IMR-90 (cell line): ENCODE measurements at regions of chr21 and their contacts with region 1.

Region 1: DNA sequence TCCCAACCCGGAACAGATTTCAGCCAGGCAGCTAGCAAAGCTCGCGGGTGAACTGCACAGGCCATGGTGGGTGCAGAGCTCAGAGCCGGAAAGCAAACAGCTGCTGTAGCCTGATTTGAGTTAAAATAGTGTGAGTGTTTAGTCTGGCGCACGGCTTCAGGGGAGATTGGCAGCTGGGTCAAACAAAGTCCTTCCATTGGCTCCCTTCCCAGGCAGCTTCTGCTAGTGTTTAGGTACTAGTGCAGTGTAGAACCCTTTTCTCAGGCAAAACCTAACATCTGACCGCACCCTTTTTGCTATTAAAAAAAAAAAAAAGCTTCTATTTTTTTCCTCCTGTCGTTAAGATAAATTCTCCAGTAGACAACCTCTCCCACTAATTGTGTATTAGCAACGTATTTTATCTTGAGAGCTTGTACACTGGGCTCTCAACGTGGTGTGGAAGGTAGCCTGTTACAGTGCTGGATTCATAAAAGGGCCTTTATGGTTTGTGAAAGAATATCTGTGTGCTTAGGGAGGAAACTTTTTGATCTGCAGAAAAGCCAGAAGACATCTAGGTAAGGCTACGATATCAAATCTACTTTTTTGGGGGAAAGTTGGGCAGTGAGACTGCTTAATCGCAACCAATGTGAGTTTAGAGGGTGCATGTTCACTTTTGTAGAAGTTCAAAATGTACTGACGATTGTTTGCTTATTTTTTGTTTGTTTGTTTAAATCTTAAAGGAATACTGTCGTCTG is 689.6 kb downstream of the USP25 start:
- DNase-seq: peak; percentile 57
- ATAC-seq: peak; percentile 73
- H3K4me3 ChIP-seq: no peak overlapping the region
- H3K27ac ChIP-seq: no peak overlapping the region
- H3K4me1 ChIP-seq: no peaks in the 10 kb centered on the region
- H3K27me3 ChIP-seq: no peaks in the 10 kb centered on the region
- CTCF ChIP-seq: no peak
- POLR2A ChIP-seq: no peak
- RAD21 ChIP-seq: no peak

Region 2: DNA sequence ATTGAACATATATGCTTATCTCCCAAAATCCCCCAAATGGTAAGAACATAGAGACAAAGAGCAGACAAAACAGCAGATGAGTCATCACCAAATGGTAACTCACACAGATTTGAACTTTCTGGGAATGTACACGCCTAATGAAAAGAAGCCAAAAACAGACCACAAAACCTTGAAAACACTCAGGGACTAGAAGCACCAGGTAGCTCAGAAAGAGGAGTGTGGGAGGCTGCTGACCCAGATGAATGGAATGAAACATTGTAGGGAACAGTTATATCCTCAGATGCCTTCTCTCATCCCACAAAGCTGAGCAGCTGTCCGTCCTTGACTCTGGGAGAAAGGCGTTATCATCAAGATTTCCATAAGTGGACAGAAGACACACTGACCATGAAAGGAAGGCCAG is 996.6 kb before region 1 on chr21:
- CTCF ChIA-PET with region 1: no interaction called
- POLR2A ChIA-PET with region 1: no interaction called
- dilution Hi-C with region 1: no loop called
- in situ Hi-C with region 1: no loop called
- intact Hi-C with region 1: loop called (anchors 5 kb)
- DNase-seq: peak; percentile 2
- ATAC-seq: no peak
- H3K4me3 ChIP-seq: no peak overlapping the region
- H3K27ac ChIP-seq: no peak overlapping the region
- H3K4me1 ChIP-seq: no peaks in the 10 kb centered on the region
- H3K27me3 ChIP-seq: no peaks in the 10 kb centered on the region
- CTCF ChIP-seq: no peak
- POLR2A ChIP-seq: no peak
- RAD21 ChIP-seq: no peak

Region 3: DNA sequence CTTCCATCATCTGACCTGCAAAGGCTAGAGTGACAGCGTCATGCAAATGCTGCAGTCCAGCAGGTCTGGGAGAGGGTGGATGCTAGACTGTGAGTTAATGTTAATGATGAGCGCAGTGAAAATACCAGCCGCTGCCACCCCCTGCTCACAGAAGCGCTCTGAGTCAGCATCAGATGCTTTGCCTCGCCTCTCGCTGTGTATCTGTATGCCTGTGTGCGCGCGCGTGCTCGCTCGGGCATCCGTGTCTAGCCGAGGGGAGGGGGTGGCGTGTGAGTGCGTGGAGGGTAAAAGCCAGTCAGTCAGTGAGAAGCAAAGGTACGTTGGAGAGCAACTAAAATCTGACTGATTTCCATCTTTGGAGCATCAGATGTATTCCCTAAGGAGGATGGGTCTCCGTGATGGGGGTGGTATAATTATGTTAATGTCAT is 169.1 kb after region 1 on chr21:
- CTCF ChIA-PET with region 1: no interaction called
- POLR2A ChIA-PET with region 1: no interaction called
- dilution Hi-C with region 1: no loop called
- in situ Hi-C with region 1: no loop called
- intact Hi-C with region 1: loop called (anchors 5 kb)
- DNase-seq: peak; percentile 84
- ATAC-seq: peak; percentile 98
- H3K4me3 ChIP-seq: peak overlapping the region; percentile 46
- H3K27ac ChIP-seq: no peak overlapping the region
- H3K4me1 ChIP-seq: peaks cover 6% of the 10 kb centered on the region; the same call in 1 of the 2 replicates
- H3K27me3 ChIP-seq: no peaks in the 10 kb centered on the region
- CTCF ChIP-seq: no peak
- POLR2A ChIP-seq: no peak; the same call in 1 of the 2 replicates
- RAD21 ChIP-seq: 0 out of 2 replicates have a peak, but pooled peaks have one; percentile 14